Cardiac septum (tissue), 1 donor: ENCODE measurements at regions of chr12 and their contacts with region 1.

Region 1: DNA sequence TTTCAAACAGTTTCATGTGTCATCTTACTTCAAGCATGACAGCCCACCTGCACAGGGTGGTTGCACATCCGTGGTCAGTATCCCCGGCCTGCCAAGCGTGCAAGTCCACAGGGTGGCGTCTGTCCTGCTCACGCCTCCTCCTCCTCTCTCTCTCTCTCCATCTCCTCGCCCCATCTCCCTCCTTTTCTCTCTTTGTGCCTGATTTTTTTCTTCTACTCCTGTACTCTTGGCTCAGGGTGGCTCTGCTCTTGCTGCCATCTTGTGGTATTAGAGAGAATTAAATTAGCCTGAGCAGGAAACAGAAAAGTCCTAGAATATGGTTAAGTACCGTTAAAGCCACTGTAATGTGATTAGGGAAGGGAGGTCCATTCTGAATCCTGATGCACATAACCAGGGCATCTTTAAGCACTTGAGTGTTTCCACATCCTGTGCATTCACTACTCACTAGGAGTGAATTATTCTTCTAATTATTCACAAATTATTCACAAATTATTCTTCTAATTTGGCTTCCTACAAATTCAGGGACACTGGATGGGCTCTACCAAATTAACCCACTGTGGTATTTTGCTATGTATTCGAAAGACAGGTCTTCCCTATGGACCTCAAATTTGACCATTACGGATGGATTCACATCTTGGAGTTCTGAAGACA is 25.5 kb upstream of the DTX1 start:
- DNase-seq: no peak

Region 2: DNA sequence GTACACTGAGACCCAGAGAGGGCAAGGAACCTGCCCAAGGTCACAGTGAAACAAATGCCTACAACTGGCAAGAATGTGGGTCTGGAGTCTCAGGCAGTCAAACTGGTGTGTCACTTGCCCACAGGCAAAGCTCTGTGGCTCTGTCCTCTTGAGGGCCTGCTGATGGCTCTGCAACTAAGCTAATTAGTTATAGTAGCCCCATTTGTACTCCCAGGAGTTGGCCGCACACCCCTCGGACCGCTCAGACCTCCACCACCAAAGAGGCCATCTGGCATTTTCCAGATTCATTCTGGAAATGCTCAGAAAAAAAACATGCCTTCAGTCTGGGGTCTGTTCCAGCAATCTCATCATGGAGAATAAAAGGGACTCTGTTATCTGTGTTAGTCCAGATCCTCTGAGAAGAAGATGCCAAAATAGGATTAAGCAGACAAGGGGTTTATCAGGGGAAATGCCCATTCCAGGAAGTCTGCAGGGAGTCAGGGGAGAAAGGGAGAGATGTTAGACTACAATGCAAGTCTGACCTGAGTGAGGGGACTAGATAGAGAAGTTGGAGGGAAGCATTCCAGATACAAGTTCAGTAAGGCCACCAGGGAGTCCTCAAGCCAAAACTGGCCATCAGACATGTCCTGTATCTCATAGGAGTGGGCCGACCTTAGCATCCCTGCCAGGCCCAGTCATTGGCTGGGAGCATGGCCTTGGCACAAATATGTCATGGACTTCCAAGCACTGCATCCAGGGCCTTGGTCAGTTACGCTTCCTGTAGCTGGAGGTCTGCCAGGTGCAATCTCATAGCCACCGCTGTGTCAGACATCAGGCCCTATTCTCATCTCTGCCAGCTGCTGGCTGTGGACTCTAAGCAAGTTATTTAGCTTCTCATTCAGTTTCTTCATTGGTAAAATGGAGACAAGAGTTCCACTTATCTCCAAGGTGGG is 139.6 kb before region 1 on chr12:
- intact Hi-C with region 1: no loop called
- DNase-seq: no peak

Region 3: GRCh38 chr12:112924986-112925385 is 106.0 kb before region 1 on chr12:
- intact Hi-C with region 1: no loop called
- DNase-seq: no peak

Region 4: GRCh38 chr12:112992541-112993398 is 38.2 kb before region 1 on chr12:
- intact Hi-C with region 1: loop called (anchors 5 kb)
- DNase-seq: no peak